Testis (tissue), 5 donors: ENCODE measurements at regions of chr18 and their contacts with region 1.

Region 1: DNA sequence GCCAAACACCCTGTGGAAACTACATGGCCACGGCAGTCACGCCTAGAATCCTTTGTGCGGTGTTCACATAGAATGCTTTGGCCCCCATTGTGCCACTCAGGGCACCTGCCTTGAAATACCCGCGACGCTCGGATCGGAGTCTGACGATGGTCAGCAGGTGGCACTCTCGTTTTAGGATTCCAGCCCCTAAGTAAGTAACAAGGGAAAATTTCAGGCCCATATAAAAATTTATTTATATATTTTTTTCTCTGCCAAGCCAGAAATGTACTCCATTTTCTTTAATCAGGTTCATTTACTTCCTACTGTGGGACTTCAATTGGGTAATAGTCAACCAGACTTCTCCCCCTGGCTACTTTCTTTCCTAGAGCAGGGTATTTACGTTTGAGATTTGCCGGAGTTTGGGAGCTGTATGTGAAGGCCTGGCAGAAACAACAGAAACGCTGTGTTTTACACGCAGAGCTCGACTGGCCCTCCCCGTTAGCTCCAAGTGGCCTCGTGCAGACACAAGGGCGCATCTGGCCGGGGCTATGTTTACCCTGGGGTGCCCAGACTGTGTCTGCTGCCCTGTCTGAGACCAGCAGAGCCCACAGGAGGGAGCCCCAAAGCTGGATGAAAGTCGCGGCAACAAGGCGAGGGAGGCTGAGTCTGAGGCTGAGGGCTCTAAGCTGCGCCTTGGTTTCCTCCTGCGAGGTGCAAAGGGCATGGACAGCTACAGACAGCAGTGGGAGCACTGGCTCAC is 41.6 kb downstream of the LRRC30 start:
- DNase-seq: peak; percentile 82
- H3K4me3 ChIP-seq: no peak overlapping the region
- H3K27ac ChIP-seq: peak overlapping the region; percentile 53 to 57
- H3K4me1 ChIP-seq: no peaks in the 10 kb centered on the region
- H3K27me3 ChIP-seq: no peaks in the 10 kb centered on the region
- CTCF ChIP-seq: peak; percentile 24 to 30 (median 27)
- POLR2A ChIP-seq: no peak

Region 2: DNA sequence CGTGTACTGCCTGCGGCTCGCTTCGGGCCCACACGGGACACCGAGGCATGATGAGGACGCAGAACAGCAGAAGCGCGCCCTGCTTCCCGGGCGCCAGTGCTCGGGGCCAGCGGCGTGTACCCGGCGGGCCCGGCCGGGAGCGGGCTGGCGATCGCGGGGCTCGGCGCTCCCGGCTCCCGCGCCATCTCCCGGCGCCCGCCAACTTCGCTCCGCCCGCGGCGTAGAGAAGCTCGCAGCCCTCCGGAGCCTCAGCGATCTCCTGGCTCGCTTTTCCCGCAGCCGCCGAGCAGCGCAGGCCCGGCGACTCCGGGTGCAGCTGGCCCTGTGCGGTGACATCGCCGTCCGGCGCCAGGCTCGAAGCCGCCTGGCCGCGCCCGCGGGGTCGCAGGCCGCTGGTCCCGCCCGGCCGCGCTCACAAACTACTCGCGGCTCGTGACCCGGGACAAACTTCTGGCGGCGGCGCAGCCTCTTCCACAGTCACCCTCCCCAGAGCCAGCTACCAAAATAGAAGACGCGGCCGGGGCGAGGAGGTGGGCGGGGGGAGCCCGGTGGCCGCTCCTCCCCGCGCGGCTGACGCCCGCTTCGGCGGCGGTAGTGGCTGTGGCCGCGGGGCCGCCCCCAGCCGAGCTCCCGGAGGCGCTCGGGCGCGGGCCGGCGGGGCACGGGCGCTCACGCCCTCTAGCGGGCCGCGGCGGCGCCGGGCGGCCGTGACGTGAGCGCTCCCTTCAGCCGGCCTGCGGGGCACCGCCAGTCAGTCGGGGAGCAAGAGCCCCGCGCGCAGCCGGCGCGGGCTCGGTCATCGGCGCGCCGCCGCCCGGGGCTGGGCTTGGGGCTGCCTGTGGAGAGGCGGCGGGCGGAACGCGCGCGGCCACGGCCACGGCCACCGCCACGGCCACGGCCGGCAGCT is 294.3 kb after region 1 on chr18 and contains the start of gene PTPRM:
- intact Hi-C with region 1: loop called (anchors 10 kb)
- DNase-seq: peak; percentile 87
- H3K4me3 ChIP-seq: peak within 1 kb of the TSS; percentile 82 to 88
- H3K27ac ChIP-seq: peak within 1 kb of the TSS; percentile 91 to 99
- H3K4me1 ChIP-seq: peaks cover 14% of the 10 kb centered on the region
- H3K27me3 ChIP-seq: no peaks in the 10 kb centered on the region
- CTCF ChIP-seq: peak in 2 of 3 experiments; percentile 60 to 93
- POLR2A ChIP-seq: no peak
- total RNA-seq, gene PTPRM: 94.6 to 101 TPM

Region 3: GRCh38 chr18:7592305-7593071 is 320.0 kb after region 1 on chr18:
- intact Hi-C with region 1: no loop called
- DNase-seq: no peak
- H3K4me3 ChIP-seq: no peak overlapping the region
- H3K27ac ChIP-seq: no peak overlapping the region
- H3K4me1 ChIP-seq: no peaks in the 10 kb centered on the region
- H3K27me3 ChIP-seq: no peaks in the 10 kb centered on the region
- CTCF ChIP-seq: no peak
- POLR2A ChIP-seq: no peak

Region 4: DNA sequence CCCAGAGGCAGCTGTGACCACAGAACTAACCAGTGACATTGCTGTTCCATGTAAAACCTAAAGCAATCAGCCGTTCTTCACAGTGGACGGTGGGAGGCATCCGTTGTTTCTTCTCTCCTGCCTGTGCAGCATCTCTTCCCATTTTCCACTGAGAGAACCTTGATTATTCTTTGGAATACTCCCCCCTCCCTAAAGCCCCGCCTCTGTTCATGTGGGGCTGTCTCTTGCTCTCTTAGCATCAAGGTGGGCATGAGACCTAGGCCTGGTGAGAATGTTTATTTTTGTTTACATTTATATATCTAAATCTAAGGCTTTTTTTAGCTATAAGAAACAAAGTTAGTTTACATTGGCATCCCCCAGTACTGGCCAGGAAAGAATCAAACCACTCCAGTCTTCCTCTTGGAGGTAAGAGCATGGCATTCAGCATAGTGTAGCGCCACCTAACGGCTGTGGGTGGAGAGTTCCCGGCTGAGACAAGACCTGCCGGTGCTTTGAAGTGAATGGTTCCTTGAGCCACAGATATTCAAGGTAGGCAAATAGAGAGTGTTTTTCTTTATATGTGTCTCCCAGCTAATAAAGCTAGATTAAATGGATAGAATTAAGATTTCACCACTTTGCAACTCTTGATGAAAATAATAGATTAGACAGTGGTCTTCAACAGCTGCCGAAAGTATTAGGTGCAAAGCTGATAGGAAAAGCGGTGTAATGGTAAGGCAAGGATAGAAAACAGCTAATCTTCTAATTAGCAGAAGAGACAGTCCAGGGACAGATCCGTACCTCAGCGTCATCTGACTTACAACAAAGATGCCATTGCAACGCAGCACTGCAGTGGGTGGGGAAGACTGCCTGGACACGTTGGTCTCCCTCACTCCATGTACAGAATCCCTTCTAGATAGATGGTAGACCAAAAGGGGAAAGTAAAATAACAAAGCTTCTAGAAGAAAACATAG is 1117.2 kb after region 1 on chr18:
- intact Hi-C with region 1: loop called (anchors 10 kb)
- DNase-seq: peak; percentile 87
- H3K4me3 ChIP-seq: no peak overlapping the region
- H3K27ac ChIP-seq: no peak overlapping the region
- H3K4me1 ChIP-seq: no peaks in the 10 kb centered on the region
- H3K27me3 ChIP-seq: no peaks in the 10 kb centered on the region
- CTCF ChIP-seq: peak; percentile 55 to 77 (median 59)
- POLR2A ChIP-seq: no peak